ENCODE measurements at regions of chr12 and their contacts with region 1.

Region 1: DNA sequence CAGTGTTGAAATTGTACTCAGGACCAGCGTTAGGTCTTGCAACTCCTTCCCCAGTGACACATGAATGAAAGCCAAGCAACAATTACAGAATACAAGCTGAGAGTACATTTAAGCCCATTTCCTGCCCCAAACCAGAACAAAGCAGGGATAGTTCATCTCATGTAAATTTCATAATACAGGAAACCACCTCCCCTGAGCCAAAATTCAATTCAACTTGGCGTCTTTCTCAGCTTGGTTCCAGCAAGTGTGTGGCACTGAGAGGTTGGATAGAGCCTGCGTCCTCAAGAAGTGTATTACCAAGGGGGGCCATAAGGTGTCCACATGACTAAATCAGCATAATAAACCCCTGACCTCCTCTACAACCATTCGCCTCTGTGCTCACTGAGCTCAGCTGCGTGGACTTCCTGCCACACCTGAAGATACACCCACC is 278.9 kb upstream of the CRY1 start:
- DNase-seq: peak; percentile 73
- ATAC-seq: peak; percentile 59
- H3K4me3 Mint-ChIP-seq: peak overlapping the region; percentile 68
- H3K27ac Mint-ChIP-seq: peak overlapping the region; percentile 95
- H3K4me1 Mint-ChIP-seq: peaks cover 75% of the 10 kb centered on the region
- H3K27me3 Mint-ChIP-seq: no peaks in the 10 kb centered on the region

Region 2: GRCh38 chr12:107356266-107356936 is 15.8 kb before region 1 on chr12:
- CTCF ChIA-PET with region 1: interaction called, 15 read pairs
- POLR2A ChIA-PET with region 1: interaction called, 5 read pairs
- DNase-seq: peak; percentile 36
- ATAC-seq: peak; percentile 71
- H3K4me3 Mint-ChIP-seq: no peak overlapping the region
- H3K27ac Mint-ChIP-seq: no peak overlapping the region
- H3K4me1 Mint-ChIP-seq: peaks cover 84% of the 10 kb centered on the region
- H3K27me3 Mint-ChIP-seq: no peaks in the 10 kb centered on the region

Region 3: GRCh38 chr12:107474639-107475539 is 102.6 kb after region 1 on chr12:
- CTCF ChIA-PET with region 1: no interaction called
- POLR2A ChIA-PET with region 1: no interaction called
- DNase-seq: peak; percentile 23
- ATAC-seq: peak; percentile 48
- H3K4me3 Mint-ChIP-seq: no peak overlapping the region
- H3K27ac Mint-ChIP-seq: peak overlapping the region; percentile 58
- H3K4me1 Mint-ChIP-seq: peaks cover 26% of the 10 kb centered on the region
- H3K27me3 Mint-ChIP-seq: no peaks in the 10 kb centered on the region

Measured in activated CD8-positive, alpha-beta T cell treated with anti-CD3 and anti-CD28 coated beads, Interleukin-2, amount 10 ng/mL, durations not matched to agents 7 days and 5 days (primary cell).